ENCODE measurements at regions of chr1 and their contacts with region 1.

Region 1: DNA sequence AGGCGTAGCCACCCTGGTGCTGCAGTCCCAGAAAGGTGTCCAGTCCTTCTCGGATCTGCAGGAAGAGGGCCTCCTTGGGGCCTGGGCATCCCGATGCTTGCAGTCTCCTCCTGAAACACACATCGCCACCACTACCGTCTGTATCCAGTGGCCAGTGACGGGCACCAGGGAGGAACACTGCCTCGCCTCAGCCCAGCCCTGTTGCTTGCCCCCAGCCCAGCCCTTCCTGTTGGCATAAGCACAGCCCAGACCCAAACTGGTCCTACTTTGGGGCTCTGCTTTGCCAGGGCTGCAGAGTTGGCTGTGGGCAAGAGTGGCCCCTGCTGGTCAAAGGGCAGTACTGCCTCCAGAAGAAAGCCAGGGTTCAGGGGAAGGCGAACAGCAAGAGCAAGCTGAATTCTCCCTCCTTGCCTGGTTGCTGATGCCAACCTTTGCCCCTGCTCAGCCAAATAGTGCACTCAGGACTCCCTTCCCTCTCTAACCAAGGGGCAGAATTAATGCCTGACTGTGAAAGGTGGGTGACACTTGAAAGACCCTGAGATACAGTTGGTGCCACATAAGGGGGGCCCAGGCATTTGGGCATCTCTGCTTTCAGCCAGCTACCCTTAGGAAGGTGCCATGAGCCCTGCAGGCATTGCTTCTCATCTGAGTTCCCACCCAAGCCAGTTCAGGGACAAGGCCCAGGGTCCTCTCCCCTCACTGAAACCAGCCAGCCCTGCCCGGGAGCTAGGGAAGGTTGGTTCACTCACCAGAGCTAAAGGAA is 11.1 kb upstream of the ARHGEF2 start:
- DNase-seq: peak; percentile 75 to 91
- ATAC-seq: peak; percentile 97 to 100 (median 99)
- H3K4me3 ChIP-seq: no peak overlapping the region
- H3K4me3 Mint-ChIP-seq: no peak overlapping the region
- H3K27ac ChIP-seq: peak overlapping the region; percentile 17
- H3K27ac Mint-ChIP-seq: peak overlapping the region in 1 of 2 donors; percentile 57
- H3K4me1 ChIP-seq: peaks cover 23% of the 10 kb centered on the region
- H3K4me1 Mint-ChIP-seq: peaks cover 11 to 12% of the 10 kb centered on the region in 2 donors
- H3K27me3 ChIP-seq: no peaks in the 10 kb centered on the region
- H3K27me3 Mint-ChIP-seq: no peaks in the 10 kb centered on the region
- CTCF ChIP-seq: peak; percentile 98

Region 2: DNA sequence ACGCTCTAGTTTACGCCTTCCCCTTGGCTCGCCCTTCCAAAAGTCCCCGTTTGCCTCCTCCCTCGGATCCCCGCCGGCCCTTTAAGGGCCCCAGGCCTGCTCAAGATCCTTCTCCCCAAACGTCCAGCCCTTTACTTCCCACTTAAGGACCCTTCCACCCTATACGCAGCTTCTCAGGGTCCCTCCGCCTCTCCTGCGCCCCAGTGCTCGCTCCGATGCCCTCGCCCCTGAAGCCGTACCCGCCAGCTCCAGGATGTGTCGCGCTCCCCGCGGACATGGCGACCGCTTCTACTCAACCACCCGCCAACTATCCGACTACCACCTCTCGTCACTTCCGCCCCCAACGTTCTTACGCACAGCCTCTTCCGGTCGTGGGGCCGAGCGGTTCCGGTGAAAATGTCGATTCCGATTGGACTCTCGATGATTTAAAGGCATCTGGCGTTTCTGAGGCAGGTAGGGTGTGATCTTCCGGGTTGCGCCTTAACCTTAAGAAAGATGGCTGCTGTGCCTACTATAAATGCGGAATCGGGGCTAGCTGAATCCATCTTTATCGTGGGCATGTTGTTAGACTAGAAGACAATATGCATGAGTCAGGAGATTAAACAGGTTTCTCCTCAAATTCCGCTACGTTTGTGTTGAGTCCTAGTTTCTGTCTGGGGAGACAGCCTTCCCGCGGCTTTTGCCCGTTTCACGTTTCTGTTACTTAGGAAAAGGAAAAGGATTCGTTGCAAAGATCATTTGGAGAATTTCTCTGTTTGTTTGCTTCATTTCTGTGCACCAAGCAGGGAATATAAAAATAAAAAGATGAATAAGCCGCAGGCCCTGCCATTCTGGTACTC is 55.1 kb before region 1 on chr1 and contains the start of gene KHDC4:
- intact Hi-C with region 1: loop called (anchors 1 kb)
- DNase-seq: peak; percentile 91 to 99
- ATAC-seq: peak; percentile 92 to 98 (median 93)
- H3K4me3 ChIP-seq: peak within 1 kb of the TSS; percentile 93
- H3K4me3 Mint-ChIP-seq: no peak within 1 kb of the TSS
- H3K27ac ChIP-seq: peak within 1 kb of the TSS; percentile 92
- H3K27ac Mint-ChIP-seq: no peak within 1 kb of the TSS
- H3K4me1 ChIP-seq: peaks cover 31% of the 10 kb centered on the region
- H3K4me1 Mint-ChIP-seq: peaks cover 19 to 21% of the 10 kb centered on the region in 2 donors
- H3K27me3 ChIP-seq: no peaks in the 10 kb centered on the region
- H3K27me3 Mint-ChIP-seq: no peaks in the 10 kb centered on the region
- CTCF ChIP-seq: peak; percentile 21
- total RNA-seq, gene KHDC4: 61.9 to 101 (median 85.9) TPM

Region 3: DNA sequence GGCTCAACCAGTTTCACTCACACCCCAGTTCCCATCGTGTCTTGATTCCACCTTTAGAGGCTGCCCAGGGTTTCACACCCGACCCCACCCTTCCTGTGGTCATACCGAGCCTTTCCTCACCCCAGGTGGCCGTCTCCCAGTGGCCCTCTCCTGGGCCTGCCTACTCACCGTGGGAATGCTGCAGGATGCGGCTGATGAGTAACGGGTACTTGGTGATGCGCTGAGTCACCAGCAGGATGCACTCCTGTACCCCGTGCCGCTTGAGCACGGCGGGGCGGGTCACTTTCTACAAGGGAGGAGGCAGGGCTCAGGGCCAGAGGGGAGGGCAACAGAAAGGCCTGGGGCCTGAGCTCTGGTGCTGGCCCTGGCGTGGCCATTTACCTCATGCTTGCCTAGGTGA is 27.5 kb before region 1 on chr1:
- intact Hi-C with region 1: loop called (anchors 1 kb)
- DNase-seq: peak; percentile 39 to 47
- ATAC-seq: peak; percentile 76 to 86 (median 83)
- H3K4me3 ChIP-seq: no peak overlapping the region
- H3K4me3 Mint-ChIP-seq: no peak overlapping the region
- H3K27ac ChIP-seq: peak overlapping the region; percentile 13
- H3K27ac Mint-ChIP-seq: peak overlapping the region; percentile 83 to 88
- H3K4me1 ChIP-seq: peaks cover 45% of the 10 kb centered on the region
- H3K4me1 Mint-ChIP-seq: peaks cover 16 to 37% of the 10 kb centered on the region in 2 donors
- H3K27me3 ChIP-seq: no peaks in the 10 kb centered on the region
- H3K27me3 Mint-ChIP-seq: no peaks in the 10 kb centered on the region
- CTCF ChIP-seq: peak; percentile 30

Region 4: DNA sequence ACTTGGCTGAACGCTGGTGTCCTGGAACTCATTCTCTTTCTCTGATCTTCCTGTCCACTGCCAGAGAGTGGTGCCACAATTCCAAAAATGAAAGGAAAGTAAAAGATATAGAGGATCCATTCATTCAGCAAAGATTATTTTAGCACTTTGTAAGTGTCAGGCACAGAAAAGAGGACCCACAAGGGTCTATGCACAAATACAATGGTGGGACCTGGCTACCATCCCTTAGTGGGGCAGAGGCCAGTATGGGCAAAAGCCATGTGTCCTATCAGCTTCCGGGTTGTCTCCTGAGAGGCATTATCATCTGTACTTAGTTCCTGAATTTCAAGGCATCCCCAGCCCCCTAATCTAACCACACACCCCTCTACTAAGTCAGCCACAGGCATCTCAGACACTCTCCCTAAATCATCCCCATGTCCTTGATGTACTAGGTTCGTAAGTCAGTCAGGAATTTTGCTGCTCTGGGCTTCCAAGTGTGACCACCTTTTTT is 12.3 kb after region 1 on chr1:
- intact Hi-C with region 1: no loop called
- DNase-seq: no peak
- ATAC-seq: no peak
- H3K4me3 ChIP-seq: no peak overlapping the region
- H3K4me3 Mint-ChIP-seq: no peak overlapping the region
- H3K27ac ChIP-seq: no peak overlapping the region
- H3K27ac Mint-ChIP-seq: peak overlapping the region in 1 of 2 donors; percentile 13
- H3K4me1 ChIP-seq: peaks cover 24% of the 10 kb centered on the region
- H3K4me1 Mint-ChIP-seq: peaks cover 21% of the 10 kb centered on the region in 2 donors
- H3K27me3 ChIP-seq: no peaks in the 10 kb centered on the region
- H3K27me3 Mint-ChIP-seq: no peaks in the 10 kb centered on the region
- CTCF ChIP-seq: no peak

Region 5: GRCh38 chr1:156245451-156246232 is 256.2 kb after region 1 on chr1:
- intact Hi-C with region 1: no loop called
- DNase-seq: peak; percentile 28 to 65
- ATAC-seq: peak; percentile 69 to 78 (median 74)
- H3K4me3 ChIP-seq: peak overlapping the region; percentile 33
- H3K4me3 Mint-ChIP-seq: peak overlapping the region; percentile 91
- H3K27ac ChIP-seq: no peak overlapping the region
- H3K27ac Mint-ChIP-seq: peak overlapping the region; percentile 29 to 83
- H3K4me1 ChIP-seq: peaks cover 22% of the 10 kb centered on the region
- H3K4me1 Mint-ChIP-seq: peaks cover 0 to 23% of the 10 kb centered on the region in 2 donors
- H3K27me3 ChIP-seq: no peaks in the 10 kb centered on the region
- H3K27me3 Mint-ChIP-seq: no peaks in the 10 kb centered on the region
- CTCF ChIP-seq: no peak